ENCODE measurements at regions of chr2 and their contacts with region 1.

Region 1: DNA sequence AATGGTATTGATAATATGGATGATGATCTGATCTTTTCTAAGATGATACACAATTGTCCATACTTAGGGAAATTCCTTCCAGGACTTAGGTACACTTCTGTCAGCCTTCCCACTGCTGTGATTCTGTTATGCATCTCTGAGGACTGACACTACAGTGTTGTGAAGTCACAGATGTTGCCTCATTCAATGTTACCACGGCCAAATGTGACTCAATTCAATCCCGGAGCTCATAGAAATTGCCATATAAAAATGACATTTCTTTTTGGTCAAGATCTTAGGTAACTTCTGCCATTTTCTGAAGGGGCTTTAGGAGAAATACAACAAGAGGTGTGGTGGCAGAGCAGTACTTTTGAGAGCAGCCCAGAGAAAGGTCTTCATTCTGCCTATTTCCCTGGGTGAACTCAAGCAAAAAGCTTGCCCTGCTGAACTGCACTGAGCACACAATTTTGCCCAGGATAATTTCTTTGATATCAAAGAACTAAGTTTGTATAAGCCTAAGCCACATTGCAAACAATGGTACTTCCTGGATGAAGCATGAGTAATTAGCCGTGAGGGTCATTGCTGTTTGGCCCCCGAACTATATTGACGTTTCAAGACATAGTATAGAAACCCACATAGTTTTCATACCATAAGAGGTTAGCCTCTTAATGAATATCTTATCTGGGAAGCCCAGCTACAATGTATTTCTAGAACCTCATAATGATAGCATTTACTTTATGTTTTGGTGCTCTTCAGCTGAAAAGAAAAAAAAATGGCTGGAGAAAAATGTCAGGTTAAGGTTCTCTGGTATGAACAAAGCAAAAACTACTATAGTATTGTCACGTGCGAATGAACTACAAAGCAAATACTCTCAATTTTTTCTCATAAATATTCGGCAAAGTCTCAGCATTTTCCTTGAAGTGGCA is 437.4 kb downstream of the MEIS1 start:
- DNase-seq: no peak
- H3K4me3 ChIP-seq: no peak overlapping the region
- H3K27ac ChIP-seq: peak overlapping the region; percentile 94
- H3K4me1 ChIP-seq: peaks cover 60% of the 10 kb centered on the region
- H3K27me3 ChIP-seq: no peaks in the 10 kb centered on the region
- CTCF ChIP-seq: no peak

Region 2: DNA sequence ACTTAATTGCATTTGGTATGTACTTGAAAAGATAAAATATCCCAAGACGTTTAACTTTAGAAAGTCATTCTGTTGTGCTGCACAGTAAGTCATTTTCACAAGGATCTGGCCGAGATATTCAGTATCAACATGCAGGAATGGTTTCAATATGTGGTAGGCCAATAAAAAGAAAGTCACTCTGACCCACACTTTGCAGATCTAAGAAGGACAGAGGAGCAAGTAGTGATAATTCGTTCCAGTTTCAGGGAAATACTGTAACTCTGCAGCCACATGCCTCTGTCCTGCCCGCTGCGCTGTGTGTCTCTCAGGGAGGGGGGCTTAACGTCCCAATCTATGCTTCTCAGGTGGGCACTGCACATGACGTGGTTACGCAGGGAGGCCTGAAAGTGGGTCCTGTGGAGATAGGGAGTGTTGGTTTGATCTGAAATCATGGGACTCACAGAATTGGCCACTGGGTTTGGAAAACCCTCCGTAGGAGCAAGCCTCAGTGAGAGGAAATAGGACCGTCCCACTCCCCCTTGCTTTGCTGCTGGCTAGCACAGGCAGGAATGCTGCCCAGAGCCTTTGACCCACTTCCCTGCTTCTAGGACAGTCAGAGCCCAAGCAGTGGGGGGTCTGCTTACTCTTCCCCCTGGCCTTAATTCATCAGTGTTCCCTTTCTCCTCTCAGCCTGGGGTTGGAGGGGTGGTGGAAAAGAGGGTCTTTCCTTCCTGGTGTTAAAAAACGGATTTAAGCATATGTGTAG is 1125.2 kb before region 1 on chr2:
- CTCF ChIA-PET with region 1: no interaction called
- POLR2A ChIA-PET with region 1: interaction called, 9 read pairs
- intact Hi-C with region 1: loop called (anchors 1 kb)
- DNase-seq: peak; percentile 82
- H3K4me3 ChIP-seq: no peak overlapping the region
- H3K27ac ChIP-seq: peak overlapping the region; percentile 100
- H3K4me1 ChIP-seq: peaks cover 62% of the 10 kb centered on the region
- H3K27me3 ChIP-seq: no peaks in the 10 kb centered on the region
- CTCF ChIP-seq: no peak

Region 3: DNA sequence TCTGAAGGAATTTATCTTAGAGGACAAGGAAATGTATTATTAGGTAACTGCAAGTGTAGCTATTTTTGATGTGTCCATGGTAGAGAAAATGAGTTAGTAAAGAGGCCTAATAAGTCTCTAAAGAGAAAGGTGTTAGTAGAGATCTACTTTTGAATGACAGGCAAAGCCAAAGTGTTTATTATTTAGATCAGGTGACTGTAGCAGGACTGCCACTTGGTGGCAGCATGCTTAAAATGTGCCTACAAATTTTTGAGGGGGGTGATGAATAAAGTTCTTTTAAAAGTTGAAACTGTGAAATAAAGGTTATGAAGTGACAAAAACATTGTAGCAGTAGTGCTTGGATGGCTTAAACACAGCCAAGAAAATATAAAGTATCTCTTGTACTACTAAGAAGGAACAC is 858.9 kb before region 1 on chr2:
- CTCF ChIA-PET with region 1: no interaction called
- POLR2A ChIA-PET with region 1: no interaction called
- intact Hi-C with region 1: loop called (anchors 10 kb)
- DNase-seq: peak; percentile 55
- H3K4me3 ChIP-seq: no peak overlapping the region
- H3K27ac ChIP-seq: no peak overlapping the region
- H3K4me1 ChIP-seq: peaks cover 7% of the 10 kb centered on the region
- H3K27me3 ChIP-seq: no peaks in the 10 kb centered on the region
- CTCF ChIP-seq: peak; percentile 73

Region 4: GRCh38 chr2:66649006-66649405 is 223.3 kb before region 1 on chr2:
- CTCF ChIA-PET with region 1: no interaction called
- POLR2A ChIA-PET with region 1: no interaction called
- intact Hi-C with region 1: no loop called
- DNase-seq: no peak
- H3K4me3 ChIP-seq: no peak overlapping the region
- H3K27ac ChIP-seq: no peak overlapping the region
- H3K4me1 ChIP-seq: no peaks in the 10 kb centered on the region
- H3K27me3 ChIP-seq: no peaks in the 10 kb centered on the region
- CTCF ChIP-seq: no peak

Region 5: GRCh38 chr2:66962625-66963207 is 90.4 kb after region 1 on chr2:
- CTCF ChIA-PET with region 1: no interaction called
- POLR2A ChIA-PET with region 1: no interaction called
- intact Hi-C with region 1: no loop called
- DNase-seq: no peak
- H3K4me3 ChIP-seq: no peak overlapping the region
- H3K27ac ChIP-seq: no peak overlapping the region
- H3K4me1 ChIP-seq: no peaks in the 10 kb centered on the region
- H3K27me3 ChIP-seq: no peaks in the 10 kb centered on the region
- CTCF ChIP-seq: no peak

Region 6: GRCh38 chr2:67234439-67234838 is 362.1 kb after region 1 on chr2:
- CTCF ChIA-PET with region 1: no interaction called
- POLR2A ChIA-PET with region 1: no interaction called
- intact Hi-C with region 1: loop called (anchors 2 kb)
- DNase-seq: peak; percentile 88
- H3K4me3 ChIP-seq: no peak overlapping the region
- H3K27ac ChIP-seq: no peak overlapping the region
- H3K4me1 ChIP-seq: peaks cover 25% of the 10 kb centered on the region
- H3K27me3 ChIP-seq: no peaks in the 10 kb centered on the region
- CTCF ChIP-seq: peak; percentile 84

Region 7: GRCh38 chr2:67840460-67841068 is 968.2 kb after region 1 on chr2:
- CTCF ChIA-PET with region 1: no interaction called
- POLR2A ChIA-PET with region 1: interaction called, 3 read pairs
- intact Hi-C with region 1: loop called (anchors 5 kb)
- DNase-seq: peak; percentile 88
- H3K4me3 ChIP-seq: no peak overlapping the region
- H3K27ac ChIP-seq: no peak overlapping the region
- H3K4me1 ChIP-seq: peaks cover 16% of the 10 kb centered on the region
- H3K27me3 ChIP-seq: no peaks in the 10 kb centered on the region
- CTCF ChIP-seq: peak; percentile 96

Measured in A673 (cell line).